ENCODE measurements at regions of chr20 and their contacts with region 1.

Region 1: GRCh38 chr20:50274570-50275430 is 84.2 kb downstream of the CEBPB start:
- DNase-seq: peak; percentile 99 to 100 (median 100)
- H3K4me3 ChIP-seq: peak overlapping the region in 1 of 3 experiments; percentile 76
- H3K4me3 Mint-ChIP-seq: peak overlapping the region; percentile 91 to 99
- H3K27ac ChIP-seq: peak overlapping the region; percentile 99
- H3K27ac Mint-ChIP-seq: peak overlapping the region; percentile 99 to 100 (median 100)
- H3K4me1 ChIP-seq: peaks cover 97 to 98% of the 10 kb centered on the region in 2 donors
- H3K4me1 Mint-ChIP-seq: peaks cover 96% of the 10 kb centered on the region
- H3K27me3 ChIP-seq: no peaks in the 10 kb centered on the region
- H3K27me3 Mint-ChIP-seq: no peaks in the 10 kb centered on the region
- CTCF ChIP-seq: no peak

Region 2: GRCh38 chr20:49999329-49999728 is 275.5 kb before region 1 on chr20:
- intact Hi-C with region 1: no loop called
- DNase-seq: peak; percentile 78 to 95 (median 80)
- H3K4me3 ChIP-seq: no peak overlapping the region
- H3K4me3 Mint-ChIP-seq: no peak overlapping the region
- H3K27ac ChIP-seq: peak overlapping the region in 1 of 2 donors; percentile 49
- H3K27ac Mint-ChIP-seq: peak overlapping the region in 5 of 7 donors; percentile 36 to 86 (median 70)
- H3K4me1 ChIP-seq: peaks cover 54 to 57% of the 10 kb centered on the region in 2 donors
- H3K4me1 Mint-ChIP-seq: peaks cover 53% of the 10 kb centered on the region
- H3K27me3 ChIP-seq: no peaks in the 10 kb centered on the region
- H3K27me3 Mint-ChIP-seq: peaks cover 0 to 10% (median 0%) of the 10 kb centered on the region in 3 donors
- CTCF ChIP-seq: no peak

Region 3: GRCh38 chr20:50224531-50225255 is 50.1 kb before region 1 on chr20:
- intact Hi-C with region 1: loop called (anchors 2 to 5 kb)
- DNase-seq: peak; percentile 53 to 89 (median 54)
- H3K4me3 ChIP-seq: no peak overlapping the region
- H3K4me3 Mint-ChIP-seq: no peak overlapping the region
- H3K27ac ChIP-seq: peak overlapping the region; percentile 88 to 97
- H3K27ac Mint-ChIP-seq: peak overlapping the region; percentile 74 to 99 (median 97)
- H3K4me1 ChIP-seq: peaks cover 99 to 100% of the 10 kb centered on the region in 2 donors
- H3K4me1 Mint-ChIP-seq: peaks cover 94% of the 10 kb centered on the region
- H3K27me3 ChIP-seq: no peaks in the 10 kb centered on the region
- H3K27me3 Mint-ChIP-seq: no peaks in the 10 kb centered on the region
- CTCF ChIP-seq: no peak

Region 4: GRCh38 chr20:50260739-50261221 is 14.0 kb before region 1 on chr20:
- intact Hi-C with region 1: loop called in 1 of 2 experiments (anchors 1 kb)
- DNase-seq: peak; percentile 87 to 90 (median 90)
- H3K4me3 ChIP-seq: peak overlapping the region in 1 of 3 experiments; percentile 26
- H3K4me3 Mint-ChIP-seq: peak overlapping the region; percentile 58 to 61
- H3K27ac ChIP-seq: peak overlapping the region; percentile 97 to 99
- H3K27ac Mint-ChIP-seq: peak overlapping the region; percentile 96 to 100 (median 97)
- H3K4me1 ChIP-seq: peaks cover 59 to 76% of the 10 kb centered on the region in 2 donors
- H3K4me1 Mint-ChIP-seq: peaks cover 66% of the 10 kb centered on the region
- H3K27me3 ChIP-seq: no peaks in the 10 kb centered on the region
- H3K27me3 Mint-ChIP-seq: peaks cover 0 to 2% (median 0%) of the 10 kb centered on the region in 3 donors
- CTCF ChIP-seq: no peak

Region 5: GRCh38 chr20:50346372-50347283 is 71.8 kb after region 1 on chr20:
- intact Hi-C with region 1: loop called in 1 of 2 experiments (anchors 2 kb)
- DNase-seq: peak; percentile 47 to 58 (median 51)
- H3K4me3 ChIP-seq: peak overlapping the region in 1 of 3 experiments; percentile 51
- H3K4me3 Mint-ChIP-seq: peak overlapping the region; percentile 67 to 84
- H3K27ac ChIP-seq: peak overlapping the region; percentile 84 to 94
- H3K27ac Mint-ChIP-seq: peak overlapping the region; percentile 97 to 99 (median 98)
- H3K4me1 ChIP-seq: peaks cover 76 to 82% of the 10 kb centered on the region in 2 donors
- H3K4me1 Mint-ChIP-seq: peaks cover 78% of the 10 kb centered on the region
- H3K27me3 ChIP-seq: no peaks in the 10 kb centered on the region
- H3K27me3 Mint-ChIP-seq: peaks cover 1 to 6% (median 4%) of the 10 kb centered on the region in 3 donors
- CTCF ChIP-seq: no peak

Region 6: DNA sequence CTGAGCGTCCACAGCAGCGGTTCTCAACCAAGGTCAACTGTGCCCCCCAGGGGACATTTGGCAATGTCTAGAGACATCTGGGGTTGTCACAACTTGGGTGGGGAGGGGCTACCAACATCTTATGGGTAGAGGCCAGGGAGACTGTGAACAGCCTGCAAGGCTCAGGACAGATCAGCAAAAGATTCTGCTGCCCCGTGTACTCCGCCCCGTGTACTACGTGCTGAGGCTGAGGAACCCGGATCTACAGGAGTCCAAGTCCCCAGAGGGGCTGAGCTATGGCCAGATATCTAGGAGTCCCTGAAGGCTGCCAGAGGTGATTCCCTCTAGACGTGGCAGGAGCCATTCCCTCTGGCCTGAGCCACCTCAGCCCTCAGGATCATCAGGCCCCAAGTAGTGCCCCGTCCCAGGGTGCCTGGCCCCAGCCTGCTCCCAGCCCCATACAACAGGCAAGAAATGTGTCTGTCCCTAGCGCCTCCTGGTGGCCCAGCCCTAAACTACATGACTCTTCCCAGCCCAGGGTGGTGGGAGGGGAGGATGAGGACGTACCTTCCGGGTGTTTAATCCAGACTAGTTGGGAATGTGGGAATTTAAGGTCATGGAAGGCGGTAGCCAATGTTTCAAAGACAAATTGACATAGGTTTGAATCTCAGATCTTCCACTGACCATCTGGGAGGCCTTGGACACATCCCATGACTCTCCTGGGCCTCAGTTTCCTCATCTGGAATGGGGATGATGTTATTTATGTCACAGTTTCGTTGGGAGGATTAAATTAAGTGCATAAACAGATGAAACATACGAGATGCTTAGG is 185.9 kb after region 1 on chr20:
- intact Hi-C with region 1: loop called in 1 of 2 experiments (anchors 5 kb)
- DNase-seq: peak; percentile 76 to 85 (median 82)
- H3K4me3 ChIP-seq: no peak overlapping the region
- H3K4me3 Mint-ChIP-seq: peak overlapping the region in 1 of 2 donors; percentile 53
- H3K27ac ChIP-seq: peak overlapping the region in 1 of 2 donors; percentile 34
- H3K27ac Mint-ChIP-seq: peak overlapping the region; percentile 58 to 81 (median 73)
- H3K4me1 ChIP-seq: peaks cover 50 to 54% of the 10 kb centered on the region in 2 donors
- H3K4me1 Mint-ChIP-seq: peaks cover 60% of the 10 kb centered on the region
- H3K27me3 ChIP-seq: no peaks in the 10 kb centered on the region
- H3K27me3 Mint-ChIP-seq: peaks cover 0 to 3% (median 2%) of the 10 kb centered on the region in 3 donors
- CTCF ChIP-seq: peak; percentile 95